Activated CD4-positive, alpha-beta memory T cell treated with anti-CD3 and anti-CD28 coated beads for 36 hours (primary cell): ENCODE measurements at regions of chr3 and their contacts with region 1.

Region 1: DNA sequence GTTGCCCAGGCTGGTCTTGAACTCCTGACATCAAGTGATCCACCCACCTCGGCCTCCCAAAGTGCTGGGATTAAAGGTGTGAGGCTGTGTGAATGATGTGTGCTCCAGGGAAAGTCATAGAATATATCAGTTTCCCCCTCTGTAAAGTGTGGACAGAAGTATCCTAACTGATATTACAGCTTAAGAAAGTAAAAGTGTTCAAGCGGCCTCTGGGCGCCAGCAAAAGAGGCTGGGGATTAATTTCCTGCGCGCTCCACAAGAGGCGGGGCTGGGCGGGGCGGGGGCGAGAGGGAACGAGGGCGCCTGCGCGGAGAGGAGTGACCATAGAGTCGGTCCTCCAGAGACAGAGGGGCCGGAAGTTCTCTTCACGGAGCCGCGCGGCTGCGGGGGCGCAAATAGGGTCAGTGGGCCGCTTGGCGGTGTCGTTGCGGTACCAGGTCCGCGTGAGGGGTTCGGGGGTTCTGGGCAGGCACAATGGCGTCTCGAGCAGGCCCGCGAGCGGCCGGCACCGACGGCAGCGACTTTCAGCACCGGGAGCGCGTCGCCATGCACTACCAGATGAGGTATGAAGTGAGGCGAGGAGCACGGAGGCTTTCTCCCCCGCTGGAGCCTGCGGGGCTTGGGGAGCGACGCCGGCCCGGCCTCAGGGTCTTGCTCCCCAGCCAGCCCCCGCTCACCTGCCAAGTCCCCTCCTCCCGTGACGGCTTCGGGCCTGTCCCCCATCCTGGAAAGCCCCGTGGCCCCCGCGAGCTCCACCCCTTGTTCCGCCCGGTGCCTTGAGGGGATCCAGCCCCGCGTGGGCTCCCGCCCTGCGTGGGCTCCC is at the start of gene JAGN1:
- DNase-seq: peak; percentile 96
- H3K4me3 Mint-ChIP-seq: peak within 1 kb of the TSS; percentile 99
- H3K27ac Mint-ChIP-seq: peak within 1 kb of the TSS; percentile 99
- H3K4me1 Mint-ChIP-seq: peaks cover 31% of the 10 kb centered on the region
- H3K27me3 Mint-ChIP-seq: no peaks in the 10 kb centered on the region
- total RNA-seq, gene JAGN1: 25.0 to 27.8 TPM

Region 2: DNA sequence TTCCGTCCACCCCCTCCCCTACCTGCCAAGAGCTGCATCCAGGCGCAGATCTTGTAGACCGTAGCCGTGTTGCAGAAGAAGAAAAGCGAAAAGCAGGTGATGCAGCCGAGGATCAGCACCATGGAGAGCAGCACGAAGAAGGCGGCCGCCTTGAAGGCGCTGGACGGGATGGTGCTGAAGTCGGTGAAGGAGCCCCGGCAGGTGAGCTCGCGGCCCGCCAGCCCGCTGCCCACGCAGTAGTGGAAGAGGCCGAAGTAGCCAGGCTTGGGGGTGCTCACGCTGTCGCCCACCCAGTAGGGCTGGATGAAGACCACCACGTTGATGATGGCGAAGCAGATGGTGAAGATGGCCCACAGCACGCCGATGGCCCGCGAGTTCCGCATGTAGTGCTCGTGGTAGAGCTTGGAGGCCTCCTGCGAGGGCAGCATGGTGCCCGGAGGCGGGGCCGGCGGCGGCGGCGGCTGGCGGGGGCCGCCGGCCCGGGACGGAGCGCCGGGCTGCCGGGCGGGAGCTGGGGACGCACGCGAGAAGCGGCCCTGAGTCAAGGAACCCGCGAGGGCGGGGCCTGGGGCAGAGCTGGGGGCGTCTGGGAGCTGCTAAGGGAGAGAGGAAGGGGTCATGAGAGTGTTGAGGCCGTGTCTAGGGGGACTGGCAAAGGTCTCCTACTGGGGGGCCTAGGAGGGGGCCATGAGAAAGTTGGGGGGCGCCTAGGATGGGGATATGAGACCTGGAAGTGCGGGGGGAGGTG is 338.0 kb before region 1 on chr3:
- CTCF ChIA-PET with region 1: no interaction called
- POLR2A ChIA-PET with region 1: no interaction called
- intact Hi-C with region 1: no loop called
- DNase-seq: peak; percentile 56
- H3K4me3 Mint-ChIP-seq: no peak overlapping the region
- H3K27ac Mint-ChIP-seq: no peak overlapping the region
- H3K4me1 Mint-ChIP-seq: peaks cover 7% of the 10 kb centered on the region
- H3K27me3 Mint-ChIP-seq: peaks cover 46% of the 10 kb centered on the region

Region 3: GRCh38 chr3:9649791-9650521 is 240.5 kb before region 1 on chr3:
- CTCF ChIA-PET with region 1: no interaction called
- POLR2A ChIA-PET with region 1: no interaction called
- intact Hi-C with region 1: loop called (anchors 1 kb)
- DNase-seq: no peak
- H3K4me3 Mint-ChIP-seq: peak overlapping the region; percentile 95
- H3K27ac Mint-ChIP-seq: peak overlapping the region; percentile 73
- H3K4me1 Mint-ChIP-seq: peaks cover 29% of the 10 kb centered on the region
- H3K27me3 Mint-ChIP-seq: no peaks in the 10 kb centered on the region

Region 4: GRCh38 chr3:9833078-9833477 is 57.4 kb before region 1 on chr3:
- CTCF ChIA-PET with region 1: no interaction called
- POLR2A ChIA-PET with region 1: no interaction called
- intact Hi-C with region 1: no loop called
- DNase-seq: no peak
- H3K4me3 Mint-ChIP-seq: no peak overlapping the region
- H3K27ac Mint-ChIP-seq: no peak overlapping the region
- H3K4me1 Mint-ChIP-seq: no peaks in the 10 kb centered on the region
- H3K27me3 Mint-ChIP-seq: no peaks in the 10 kb centered on the region

Region 5: GRCh38 chr3:9843715-9844438 is 46.6 kb before region 1 on chr3 and contains the start of gene RPUSD3:
- CTCF ChIA-PET with region 1: interaction called, 3 read pairs
- POLR2A ChIA-PET with region 1: no interaction called
- intact Hi-C with region 1: loop called (anchors 2 kb)
- DNase-seq: peak; percentile 97
- H3K4me3 Mint-ChIP-seq: peak within 1 kb of the TSS; percentile 99
- H3K27ac Mint-ChIP-seq: peak within 1 kb of the TSS; percentile 90
- H3K4me1 Mint-ChIP-seq: peaks cover 26% of the 10 kb centered on the region
- H3K27me3 Mint-ChIP-seq: no peaks in the 10 kb centered on the region
- total RNA-seq, gene RPUSD3: 79.0 to 80.8 TPM

Region 6: GRCh38 chr3:9902372-9903237 is 12.1 kb after region 1 on chr3 and contains the start of gene IL17RE:
- CTCF ChIA-PET with region 1: interaction called, 8 read pairs
- POLR2A ChIA-PET with region 1: interaction called, 16 read pairs
- intact Hi-C with region 1: no loop called
- DNase-seq: no peak
- H3K4me3 Mint-ChIP-seq: peak within 1 kb of the TSS; percentile 44
- H3K27ac Mint-ChIP-seq: peak within 1 kb of the TSS; percentile 78
- H3K4me1 Mint-ChIP-seq: peaks cover 27% of the 10 kb centered on the region
- H3K27me3 Mint-ChIP-seq: no peaks in the 10 kb centered on the region
- total RNA-seq, gene IL17RE: 1.8 to 1.9 TPM

Region 7: DNA sequence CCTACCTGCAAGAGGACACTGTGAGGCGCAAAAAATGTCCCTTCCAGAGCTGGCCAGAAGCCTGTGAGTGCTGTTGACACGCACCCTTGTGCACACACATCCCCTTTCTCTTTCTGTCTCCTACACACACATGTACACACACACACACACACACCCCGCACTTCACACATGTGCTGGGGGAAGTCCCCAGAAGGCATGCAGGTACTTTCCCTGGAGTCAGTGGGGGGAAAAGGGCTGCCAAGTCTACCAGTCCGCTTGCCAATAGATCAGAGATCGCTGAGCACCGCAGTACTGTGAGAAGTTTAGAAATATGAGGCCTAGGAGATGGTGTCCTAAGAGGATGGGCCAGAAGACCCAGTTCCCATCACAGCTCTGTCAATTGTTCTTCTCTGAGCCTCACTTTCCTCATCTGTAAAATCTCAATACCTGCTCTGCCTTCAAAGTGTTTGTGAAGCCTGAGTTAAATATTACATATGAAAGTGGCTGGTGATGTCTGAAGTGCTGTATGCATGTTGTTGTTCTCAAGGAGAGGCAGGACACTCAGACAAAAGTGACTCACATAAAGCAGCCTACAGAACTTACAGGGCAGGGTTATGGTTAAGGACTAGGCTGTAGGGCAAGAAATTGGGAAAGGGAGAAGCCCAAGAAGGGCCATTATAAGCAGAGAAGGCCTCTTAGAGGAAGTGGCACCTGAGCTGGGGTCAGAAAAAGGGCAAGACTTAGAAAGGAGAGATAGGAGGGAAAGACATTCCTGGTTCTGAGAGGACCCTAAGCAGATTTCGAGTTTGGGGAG is 19.0 kb after region 1 on chr3:
- CTCF ChIA-PET with region 1: no interaction called
- POLR2A ChIA-PET with region 1: interaction called, 4 read pairs
- intact Hi-C with region 1: loop called (anchors 2 kb)
- DNase-seq: peak; percentile 53
- H3K4me3 Mint-ChIP-seq: no peak overlapping the region
- H3K27ac Mint-ChIP-seq: peak overlapping the region; percentile 64
- H3K4me1 Mint-ChIP-seq: peaks cover 26% of the 10 kb centered on the region
- H3K27me3 Mint-ChIP-seq: peaks cover 2% of the 10 kb centered on the region

Region 8: DNA sequence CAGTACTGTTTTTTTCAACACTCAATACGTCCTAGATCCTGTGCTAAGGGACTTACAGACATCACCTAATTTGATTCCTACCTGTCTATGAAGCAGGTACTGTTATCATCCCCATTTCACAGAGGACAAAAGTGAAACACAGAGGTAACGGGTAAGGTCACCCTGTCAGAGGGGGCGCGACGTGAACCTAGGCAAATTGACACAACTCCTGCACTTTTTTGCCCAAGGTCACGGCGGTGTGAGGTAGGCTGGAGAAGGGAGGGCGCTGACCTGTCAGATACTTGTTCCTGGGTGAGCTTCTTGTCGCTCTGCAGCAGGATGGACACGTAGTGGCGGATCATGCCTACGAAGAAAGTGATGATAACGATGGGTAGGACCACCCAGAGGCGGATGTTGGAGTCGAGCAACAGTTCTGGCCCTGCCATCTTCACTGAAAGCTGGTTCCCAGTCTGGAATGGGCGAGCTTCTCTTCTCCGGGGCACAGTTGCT is 95.8 kb after region 1 on chr3:
- CTCF ChIA-PET with region 1: no interaction called
- POLR2A ChIA-PET with region 1: interaction called, 8 read pairs
- intact Hi-C with region 1: loop called (anchors 5 kb)
- DNase-seq: no peak
- H3K4me3 Mint-ChIP-seq: peak overlapping the region; percentile 89
- H3K27ac Mint-ChIP-seq: peak overlapping the region; percentile 98
- H3K4me1 Mint-ChIP-seq: peaks cover 31% of the 10 kb centered on the region
- H3K27me3 Mint-ChIP-seq: no peaks in the 10 kb centered on the region

Region 9: DNA sequence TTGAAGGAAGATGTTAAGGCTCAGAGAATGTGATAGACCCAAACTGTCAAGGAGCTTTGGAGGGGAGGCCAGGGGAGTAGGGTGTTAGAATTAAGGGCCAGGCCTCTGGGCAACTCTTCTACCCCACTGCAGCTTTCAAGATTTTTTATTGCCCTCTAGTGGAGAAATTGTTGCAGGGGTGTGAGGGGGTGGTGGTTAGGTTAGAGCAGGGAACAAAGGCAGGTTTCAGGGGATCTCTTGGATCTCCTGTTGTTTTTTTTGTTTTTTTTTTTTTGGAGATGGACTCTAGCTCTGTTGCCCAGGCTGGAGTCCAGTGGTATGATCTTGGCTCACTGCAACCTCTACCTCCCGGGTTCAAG is 431.9 kb after region 1 on chr3:
- CTCF ChIA-PET with region 1: no interaction called
- POLR2A ChIA-PET with region 1: interaction called, 6 read pairs
- intact Hi-C with region 1: loop called (anchors 1 kb)
- DNase-seq: peak; percentile 28
- H3K4me3 Mint-ChIP-seq: no peak overlapping the region
- H3K27ac Mint-ChIP-seq: no peak overlapping the region
- H3K4me1 Mint-ChIP-seq: peaks cover 22% of the 10 kb centered on the region
- H3K27me3 Mint-ChIP-seq: peaks cover 4% of the 10 kb centered on the region